Naive thymus-derived CD8-positive, alpha-beta T cell (primary cell): ENCODE measurements at regions of chr7 and their contacts with region 1.

Region 1: GRCh38 chr7:151315038-151315655 is 26.5 kb upstream of the NUB1 start:
- DNase-seq: peak; percentile 54 to 90 (median 81)
- ATAC-seq: peak; percentile 97 to 98
- H3K4me3 Mint-ChIP-seq: peak overlapping the region in 6 of 10 donors; percentile 11 to 74 (median 65)
- H3K27ac Mint-ChIP-seq: peak overlapping the region in 8 of 10 donors; percentile 7 to 87 (median 62)
- H3K4me1 Mint-ChIP-seq: peaks cover 0 to 4% (median 3%) of the 10 kb centered on the region in 4 donors
- H3K27me3 Mint-ChIP-seq: no peaks in the 10 kb centered on the region

Region 2: GRCh38 chr7:151226875-151227782 is 88.0 kb before region 1 on chr7 and contains the start of gene ABCF2:
- POLR2A ChIA-PET with region 1: no interaction called
- DNase-seq: peak; percentile 91 to 99 (median 97)
- ATAC-seq: peak; percentile 99
- H3K4me3 Mint-ChIP-seq: peak within 1 kb of the TSS; percentile 88 to 100 (median 98)
- H3K27ac Mint-ChIP-seq: peak within 1 kb of the TSS; percentile 95 to 98 (median 97)
- H3K4me1 Mint-ChIP-seq: peaks cover 25 to 47% (median 45%) of the 10 kb centered on the region in 4 donors
- H3K27me3 Mint-ChIP-seq: no peaks in the 10 kb centered on the region
- polyA plus RNA-seq, gene ABCF2: 23.0 to 40.4 (median 31.6) TPM

Region 3: GRCh38 chr7:151261529-151261928 is 53.6 kb before region 1 on chr7:
- POLR2A ChIA-PET with region 1: no interaction called
- DNase-seq: peak in 1 of 10 donors; percentile 47
- ATAC-seq: no peak
- H3K4me3 Mint-ChIP-seq: no peak overlapping the region
- H3K27ac Mint-ChIP-seq: no peak overlapping the region
- H3K4me1 Mint-ChIP-seq: peaks cover 0 to 3% (median 0%) of the 10 kb centered on the region in 4 donors
- H3K27me3 Mint-ChIP-seq: peaks cover 0 to 4% (median 0%) of the 10 kb centered on the region in 5 donors

Region 4: DNA sequence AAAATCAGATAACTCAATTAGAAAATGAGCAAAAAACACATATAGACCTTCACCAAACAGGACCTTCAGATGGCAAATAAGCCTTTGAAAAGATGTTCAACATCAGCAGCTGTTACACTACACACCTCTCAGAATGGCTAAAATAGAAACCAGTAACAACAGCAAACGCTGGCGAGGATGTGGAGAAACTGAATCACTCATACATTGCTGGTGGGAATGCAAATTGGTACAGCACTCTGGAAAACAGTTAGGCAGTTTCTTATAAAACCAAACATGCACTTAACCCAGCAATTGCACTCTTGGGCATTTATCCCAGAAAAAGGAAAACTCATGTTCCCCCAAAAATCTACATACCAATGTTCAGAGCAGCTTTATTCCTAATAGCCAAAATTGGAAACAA is 29.0 kb before region 1 on chr7:
- POLR2A ChIA-PET with region 1: no interaction called
- DNase-seq: no peak
- ATAC-seq: no peak
- H3K4me3 Mint-ChIP-seq: no peak overlapping the region
- H3K27ac Mint-ChIP-seq: no peak overlapping the region
- H3K4me1 Mint-ChIP-seq: no peaks in the 10 kb centered on the region
- H3K27me3 Mint-ChIP-seq: peaks cover 0 to 13% (median 0%) of the 10 kb centered on the region in 5 donors

Region 5: DNA sequence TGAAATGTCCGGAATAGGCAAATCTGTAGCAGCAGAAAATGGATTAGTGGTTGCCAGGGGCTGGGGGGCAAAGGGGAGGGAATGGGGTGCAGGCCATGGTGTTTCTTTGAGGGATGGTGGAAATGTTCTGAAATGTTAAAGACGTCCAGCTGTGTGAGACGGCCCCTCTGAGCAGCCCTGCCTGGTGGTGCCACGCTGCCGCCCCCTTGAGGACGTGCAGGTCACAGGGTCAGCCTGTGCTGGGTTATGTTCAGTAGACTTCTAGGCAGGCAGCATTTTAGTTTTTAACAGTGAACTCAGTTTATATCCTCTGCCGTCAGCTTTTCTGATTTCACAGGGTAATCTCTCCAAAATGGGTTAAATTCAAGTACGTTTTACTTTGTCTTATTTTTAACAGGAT is 35.9 kb after region 1 on chr7:
- POLR2A ChIA-PET with region 1: interaction called, 27 read pairs
- DNase-seq: peak in 2 of 10 donors; percentile 11 to 21
- ATAC-seq: no peak
- H3K4me3 Mint-ChIP-seq: peak overlapping the region; percentile 58 to 90 (median 74)
- H3K27ac Mint-ChIP-seq: peak overlapping the region in 9 of 10 donors; percentile 87 to 96 (median 93)
- H3K4me1 Mint-ChIP-seq: peaks cover 22 to 61% (median 54%) of the 10 kb centered on the region in 4 donors
- H3K27me3 Mint-ChIP-seq: no peaks in the 10 kb centered on the region

Region 6: GRCh38 chr7:151432791-151433521 is 117.8 kb after region 1 on chr7:
- POLR2A ChIA-PET with region 1: no interaction called
- DNase-seq: peak in 9 of 10 donors; percentile 30 to 80 (median 57)
- ATAC-seq: peak; percentile 58
- H3K4me3 Mint-ChIP-seq: peak overlapping the region in 9 of 10 donors; percentile 14 to 75 (median 60)
- H3K27ac Mint-ChIP-seq: peak overlapping the region in 9 of 10 donors; percentile 67 to 93 (median 89)
- H3K4me1 Mint-ChIP-seq: peaks cover 29 to 74% (median 51%) of the 10 kb centered on the region in 4 donors
- H3K27me3 Mint-ChIP-seq: no peaks in the 10 kb centered on the region